Activated CD8-positive, alpha-beta T cell treated with anti-CD3 and anti-CD28 coated beads, Interleukin-2, amount 10 ng/mL, durations not matched to agents 7 days and 5 days (primary cell): ENCODE measurements at regions of chr9 and their contacts with region 1.

Region 1: DNA sequence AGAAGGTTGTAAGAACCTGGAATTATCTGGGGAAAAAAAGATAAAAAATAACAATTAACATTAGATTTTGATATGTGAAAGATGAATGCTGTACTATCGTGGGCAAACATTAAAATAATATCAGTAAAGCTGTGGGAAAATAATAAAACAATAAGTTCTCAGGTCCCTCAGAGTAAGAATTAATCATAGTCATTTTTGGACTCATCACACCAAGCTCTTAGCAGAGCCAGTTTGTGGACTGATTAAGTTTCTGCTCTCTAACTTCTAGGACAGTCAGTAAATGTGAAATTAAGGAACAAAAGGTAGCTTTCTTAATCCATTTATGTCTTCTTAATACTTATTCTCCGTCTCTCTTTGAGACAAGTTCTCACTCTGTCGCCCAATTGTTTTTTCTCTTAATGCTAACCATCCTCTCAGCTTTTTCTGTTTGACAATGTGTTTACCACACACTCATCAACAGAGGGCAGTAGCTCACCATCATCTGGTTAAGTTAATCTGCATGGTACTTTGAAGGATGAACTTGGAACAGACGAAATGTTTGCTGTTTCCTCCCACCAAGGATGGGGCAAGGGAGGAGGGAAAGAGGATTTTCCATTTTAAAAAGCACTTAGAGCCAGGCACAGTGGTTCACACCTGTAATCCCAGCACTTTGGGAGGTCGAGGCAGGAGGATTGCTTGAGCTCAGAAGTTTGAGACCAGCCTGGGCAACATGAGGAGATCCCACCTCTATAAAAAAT is 5.3 kb upstream of the ACO1 start:
- DNase-seq: peak; percentile 70
- ATAC-seq: peak; percentile 76
- H3K4me3 Mint-ChIP-seq: no peak overlapping the region
- H3K27ac Mint-ChIP-seq: no peak overlapping the region
- H3K4me1 Mint-ChIP-seq: peaks cover 14% of the 10 kb centered on the region
- H3K27me3 Mint-ChIP-seq: peaks cover 34% of the 10 kb centered on the region

Region 2: GRCh38 chr9:32419921-32420320 is 40.8 kb after region 1 on chr9:
- CTCF ChIA-PET with region 1: interaction called, 12 read pairs
- POLR2A ChIA-PET with region 1: no interaction called
- DNase-seq: no peak
- ATAC-seq: no peak
- H3K4me3 Mint-ChIP-seq: no peak overlapping the region
- H3K27ac Mint-ChIP-seq: no peak overlapping the region
- H3K4me1 Mint-ChIP-seq: no peaks in the 10 kb centered on the region
- H3K27me3 Mint-ChIP-seq: no peaks in the 10 kb centered on the region

Region 3: GRCh38 chr9:32442433-32442832 is 63.3 kb after region 1 on chr9:
- CTCF ChIA-PET with region 1: interaction called, 68 read pairs
- POLR2A ChIA-PET with region 1: no interaction called
- DNase-seq: no peak
- ATAC-seq: no peak
- H3K4me3 Mint-ChIP-seq: no peak overlapping the region
- H3K27ac Mint-ChIP-seq: no peak overlapping the region
- H3K4me1 Mint-ChIP-seq: no peaks in the 10 kb centered on the region
- H3K27me3 Mint-ChIP-seq: no peaks in the 10 kb centered on the region

Region 4: GRCh38 chr9:32543047-32543446 is 163.9 kb after region 1 on chr9:
- CTCF ChIA-PET with region 1: interaction called, 19 read pairs
- POLR2A ChIA-PET with region 1: no interaction called
- DNase-seq: no peak
- ATAC-seq: no peak
- H3K4me3 Mint-ChIP-seq: no peak overlapping the region
- H3K27ac Mint-ChIP-seq: no peak overlapping the region
- H3K4me1 Mint-ChIP-seq: peaks cover 5% of the 10 kb centered on the region
- H3K27me3 Mint-ChIP-seq: no peaks in the 10 kb centered on the region

Region 5: GRCh38 chr9:32571969-32572899 is 193.1 kb after region 1 on chr9:
- CTCF ChIA-PET with region 1: interaction called, 608 read pairs
- POLR2A ChIA-PET with region 1: interaction called, 4 read pairs
- DNase-seq: peak; percentile 87
- ATAC-seq: peak; percentile 88
- H3K4me3 Mint-ChIP-seq: peak overlapping the region; percentile 100
- H3K27ac Mint-ChIP-seq: peak overlapping the region; percentile 99
- H3K4me1 Mint-ChIP-seq: peaks cover 26% of the 10 kb centered on the region
- H3K27me3 Mint-ChIP-seq: peaks cover 2% of the 10 kb centered on the region